ENCODE measurements at regions of chr1 and their contacts with region 1.

Region 1: GRCh38 chr1:151006327-151007052 is at the start of gene MINDY1:
- DNase-seq: peak; percentile 73
- ATAC-seq: peak; percentile 89
- H3K4me3 Mint-ChIP-seq: peak within 1 kb of the TSS; percentile 94
- H3K27ac Mint-ChIP-seq: peak within 1 kb of the TSS; percentile 99
- H3K4me1 Mint-ChIP-seq: peaks cover 38% of the 10 kb centered on the region
- H3K27me3 Mint-ChIP-seq: no peaks in the 10 kb centered on the region
- CTCF ChIP-seq: no peak
- total RNA-seq, gene MINDY1: 10.1 to 11.2 TPM (median 11.0 TPM) in 3 replicates

Region 2: DNA sequence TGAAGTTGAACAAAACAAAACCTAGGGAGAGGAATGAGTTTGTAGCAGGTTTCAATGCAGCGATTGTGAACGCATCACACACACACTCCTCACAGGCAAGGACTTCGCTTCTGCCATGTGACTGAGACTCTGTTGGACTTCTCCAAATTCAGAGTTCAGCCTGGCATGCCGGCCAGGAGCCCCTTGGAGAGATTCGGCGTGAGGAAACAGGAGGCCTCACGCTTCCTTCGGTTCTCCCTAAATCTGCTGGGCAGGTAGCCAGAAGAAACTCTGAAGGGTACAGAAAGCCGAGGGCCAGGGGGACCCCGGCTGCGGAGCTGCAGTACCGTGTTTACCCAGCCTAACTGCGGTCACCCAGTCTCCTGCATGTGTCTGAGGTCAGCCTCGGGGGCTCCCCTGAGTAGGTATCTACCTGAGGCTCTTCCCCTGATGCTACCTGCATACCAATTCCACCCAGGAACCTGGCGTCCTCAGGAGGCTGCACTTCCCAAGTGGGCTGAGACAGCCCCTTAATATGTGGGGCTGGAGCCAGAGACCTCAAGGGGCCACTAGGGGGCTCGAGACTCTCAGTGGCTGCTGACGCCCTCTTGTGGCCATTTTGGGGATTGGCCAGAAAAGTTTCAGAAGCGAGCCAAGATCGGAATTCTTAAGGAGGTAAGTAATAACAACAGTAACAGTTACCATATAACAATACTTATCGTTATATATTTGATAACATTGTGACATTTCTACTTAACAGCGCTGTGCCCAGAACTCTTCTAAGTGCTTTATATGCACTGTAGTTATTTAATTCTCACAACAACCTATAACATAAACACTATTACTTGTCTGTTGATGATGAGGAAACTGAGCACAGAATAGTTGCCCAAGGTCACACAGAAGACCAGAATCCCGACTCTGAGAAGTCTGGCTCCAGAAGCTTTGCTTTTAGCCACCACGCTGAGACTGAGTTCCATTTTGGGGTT is 27.1 kb before region 1 on chr1:
- CTCF ChIA-PET with region 1: interaction called, 66 read pairs
- POLR2A ChIA-PET with region 1: interaction called, 14 read pairs
- DNase-seq: peak; percentile 93
- ATAC-seq: peak; percentile 29
- H3K4me3 Mint-ChIP-seq: peak overlapping the region; percentile 1; the same call in 1 of the 2 replicates
- H3K27ac Mint-ChIP-seq: peak overlapping the region; percentile 84
- H3K4me1 Mint-ChIP-seq: peaks cover 54% of the 10 kb centered on the region
- H3K27me3 Mint-ChIP-seq: peaks cover 3% of the 10 kb centered on the region; the same call in 1 of the 2 replicates
- CTCF ChIP-seq: peak; percentile 100

Region 3: DNA sequence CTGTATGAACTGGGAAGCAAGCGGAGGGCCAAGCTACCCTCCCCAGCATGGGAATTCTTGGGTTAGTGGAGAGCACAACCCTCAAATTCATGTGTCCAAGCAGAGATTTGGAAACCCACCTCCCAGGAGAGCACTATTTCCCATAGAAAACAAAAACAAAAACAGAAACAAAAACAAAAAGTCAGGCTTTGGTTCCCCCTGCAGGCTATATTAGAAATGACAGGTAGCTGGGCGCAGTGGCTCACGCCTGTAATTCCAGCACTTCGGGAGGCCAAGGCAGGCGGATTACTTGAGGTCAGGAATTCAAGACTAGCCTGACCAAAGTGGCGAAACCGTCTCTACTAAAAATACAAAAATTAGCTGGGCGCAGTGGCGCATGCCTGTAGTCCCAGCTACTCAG is 10.6 kb before region 1 on chr1:
- CTCF ChIA-PET with region 1: interaction called, 74 read pairs
- POLR2A ChIA-PET with region 1: interaction called, 4 read pairs
- DNase-seq: peak; percentile 64
- ATAC-seq: peak; percentile 75
- H3K4me3 Mint-ChIP-seq: no peak overlapping the region
- H3K27ac Mint-ChIP-seq: peak overlapping the region; percentile 70; the same call in 1 of the 2 replicates
- H3K4me1 Mint-ChIP-seq: peaks cover 6% of the 10 kb centered on the region; the same call in 1 of the 2 replicates
- H3K27me3 Mint-ChIP-seq: no peaks in the 10 kb centered on the region
- CTCF ChIP-seq: peak; percentile 92

Region 4: DNA sequence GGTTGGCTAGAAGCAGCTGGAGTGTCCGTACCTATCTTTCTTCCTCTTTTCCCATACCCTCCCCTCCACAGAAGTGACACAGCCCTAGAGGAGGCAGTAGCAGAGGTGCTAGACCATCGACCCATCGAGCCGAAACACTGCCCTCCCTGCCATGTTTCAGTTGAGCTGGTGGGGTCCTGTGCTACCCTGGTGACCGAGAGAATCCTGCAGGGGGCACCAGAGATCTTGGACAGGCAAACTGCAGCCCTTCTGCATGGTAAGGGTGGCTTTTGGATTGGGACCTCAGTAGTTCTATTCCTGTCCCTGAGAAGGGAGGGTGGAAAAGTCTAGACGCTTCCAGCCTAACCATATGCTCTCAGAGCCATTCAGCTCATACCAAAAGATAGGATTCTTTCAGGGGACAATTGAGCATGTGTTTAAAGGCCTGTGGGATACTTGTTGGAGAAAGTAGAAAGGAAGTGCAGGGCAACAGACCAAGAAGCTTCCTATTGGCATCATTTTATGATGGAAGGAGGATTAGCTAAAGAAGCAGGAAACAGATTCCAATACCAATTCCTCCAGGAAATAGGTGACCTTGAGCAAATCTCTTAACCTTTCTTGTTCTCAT is 18.2 kb after region 1 on chr1:
- CTCF ChIA-PET with region 1: interaction called, 18 read pairs
- POLR2A ChIA-PET with region 1: no interaction called
- DNase-seq: peak; percentile 92
- ATAC-seq: peak; percentile 100
- H3K4me3 Mint-ChIP-seq: no peak overlapping the region
- H3K27ac Mint-ChIP-seq: peak overlapping the region; percentile 33; the same call in 1 of the 2 replicates
- H3K4me1 Mint-ChIP-seq: no peaks in the 10 kb centered on the region
- H3K27me3 Mint-ChIP-seq: no peaks in the 10 kb centered on the region
- CTCF ChIP-seq: peak; percentile 67

Region 5: GRCh38 chr1:151137789-151138188 is 131.3 kb after region 1 on chr1:
- CTCF ChIA-PET with region 1: no interaction called
- POLR2A ChIA-PET with region 1: no interaction called
- DNase-seq: no peak
- ATAC-seq: no peak
- H3K4me3 Mint-ChIP-seq: no peak overlapping the region
- H3K27ac Mint-ChIP-seq: no peak overlapping the region
- H3K4me1 Mint-ChIP-seq: peaks cover 4% of the 10 kb centered on the region
- H3K27me3 Mint-ChIP-seq: peaks cover 23% of the 10 kb centered on the region
- CTCF ChIP-seq: no peak

Measured in WTC11 (cell line).